A673 (cell line): ENCODE measurements at regions of chr17 and their contacts with region 1.

Region 1: GRCh38 chr17:35612924-35613521 is 25.9 kb downstream of the AP2B1 start:
- DNase-seq: peak; percentile 48
- H3K4me3 ChIP-seq: no peak overlapping the region
- H3K27ac ChIP-seq: no peak overlapping the region
- H3K4me1 ChIP-seq: no peaks in the 10 kb centered on the region
- H3K27me3 ChIP-seq: no peaks in the 10 kb centered on the region
- CTCF ChIP-seq: peak; percentile 61

Region 2: GRCh38 chr17:35578197-35578928 is 34.7 kb before region 1 on chr17 and contains the start of gene PEX12:
- CTCF ChIA-PET with region 1: no interaction called
- POLR2A ChIA-PET with region 1: no interaction called
- intact Hi-C with region 1: no loop called
- DNase-seq: peak; percentile 84
- H3K4me3 ChIP-seq: peak within 1 kb of the TSS; percentile 64
- H3K27ac ChIP-seq: peak within 1 kb of the TSS; percentile 77
- H3K4me1 ChIP-seq: peaks cover 3% of the 10 kb centered on the region
- H3K27me3 ChIP-seq: no peaks in the 10 kb centered on the region
- CTCF ChIP-seq: no peak
- total RNA-seq, gene PEX12: 2.5 and 3.2 TPM in 2 replicates

Region 3: DNA sequence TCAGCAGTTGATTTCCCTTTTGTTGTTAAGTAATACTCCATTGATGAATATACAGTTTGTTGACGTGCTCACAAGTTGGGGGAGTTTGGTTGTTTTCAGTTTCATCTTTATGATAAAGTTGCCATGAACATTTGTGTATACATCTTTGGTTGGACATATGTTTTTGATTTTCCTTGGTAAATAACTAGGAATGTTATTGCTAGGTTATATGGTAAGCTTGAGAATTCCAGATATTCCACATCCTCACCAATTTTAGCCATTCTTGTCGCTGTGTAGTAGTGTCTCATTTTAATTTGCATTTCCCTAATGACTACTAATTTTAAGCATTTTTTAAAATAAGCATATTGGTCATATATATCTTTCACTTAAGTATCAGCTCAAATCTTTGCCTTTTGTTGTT is 63.4 kb after region 1 on chr17:
- CTCF ChIA-PET with region 1: no interaction called
- POLR2A ChIA-PET with region 1: no interaction called
- intact Hi-C with region 1: no loop called
- DNase-seq: no peak
- H3K4me3 ChIP-seq: no peak overlapping the region
- H3K27ac ChIP-seq: no peak overlapping the region
- H3K4me1 ChIP-seq: no peaks in the 10 kb centered on the region
- H3K27me3 ChIP-seq: no peaks in the 10 kb centered on the region
- CTCF ChIP-seq: no peak

Region 4: DNA sequence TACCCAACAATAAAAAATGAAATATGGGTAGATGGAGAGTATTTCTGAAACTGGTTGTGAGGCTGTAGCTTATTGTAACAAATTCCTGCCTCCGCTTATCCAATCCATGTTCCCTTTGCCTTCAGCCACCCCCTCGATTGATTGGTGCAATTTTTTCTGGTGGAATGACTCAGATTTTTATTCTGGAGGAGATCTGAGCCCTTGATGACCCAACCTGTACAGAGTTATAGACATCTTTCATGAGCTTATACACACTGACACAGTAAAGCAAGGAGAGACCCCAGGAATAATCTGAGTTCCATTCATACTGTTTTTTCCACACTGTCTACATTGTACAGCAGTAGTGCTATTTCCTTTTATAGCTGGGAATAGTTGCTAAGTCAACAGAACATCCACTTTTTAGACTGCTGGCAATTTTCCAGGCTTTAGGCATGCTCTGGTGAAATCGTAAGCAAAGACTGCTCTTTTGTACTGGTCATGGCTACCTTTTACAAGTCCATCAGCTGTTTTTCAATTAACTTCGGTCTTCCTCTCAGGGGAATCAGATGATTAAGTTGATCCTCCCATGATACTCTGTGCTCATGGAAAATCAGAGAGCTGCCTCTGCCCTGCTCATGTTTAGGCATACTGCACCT is 520.7 kb after region 1 on chr17:
- CTCF ChIA-PET with region 1: no interaction called
- POLR2A ChIA-PET with region 1: interaction called, 19 read pairs
- intact Hi-C with region 1: no loop called
- DNase-seq: peak; percentile 4
- H3K4me3 ChIP-seq: no peak overlapping the region
- H3K27ac ChIP-seq: no peak overlapping the region
- H3K4me1 ChIP-seq: no peaks in the 10 kb centered on the region
- H3K27me3 ChIP-seq: no peaks in the 10 kb centered on the region
- CTCF ChIP-seq: no peak